Activated CD8-positive, alpha-beta T cell treated with anti-CD3 and anti-CD28 coated beads for 36 hours (primary cell): ENCODE measurements at regions of chr7 and their contacts with region 1.

Region 1: GRCh38 chr7:49618028-49618427 is 155.4 kb upstream of the VWC2 start:
- DNase-seq: no peak
- ATAC-seq: no peak
- H3K4me3 Mint-ChIP-seq: no peak overlapping the region
- H3K27ac Mint-ChIP-seq: no peak overlapping the region
- H3K4me1 Mint-ChIP-seq: no peaks in the 10 kb centered on the region
- H3K27me3 Mint-ChIP-seq: no peaks in the 10 kb centered on the region
- CTCF ChIP-seq: no peak

Region 2: DNA sequence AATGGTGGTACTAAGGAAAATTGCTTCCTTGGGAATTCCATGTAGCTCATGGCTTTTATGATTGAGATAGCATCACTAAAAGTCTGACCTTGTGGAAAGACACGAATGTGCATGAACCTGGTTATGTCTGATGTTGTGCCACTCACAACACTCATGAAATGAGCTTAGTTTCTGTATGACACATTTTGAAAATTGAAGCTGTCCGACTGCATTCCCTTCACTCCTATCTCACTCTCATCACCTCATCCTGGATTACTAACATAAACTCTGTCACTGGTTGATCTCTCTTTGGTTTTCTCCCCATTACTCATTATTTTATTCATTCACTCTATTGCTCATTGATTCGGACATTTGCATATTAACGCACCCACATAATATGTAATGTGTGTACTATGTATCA is 34.6 kb before region 1 on chr7:
- CTCF ChIA-PET with region 1: no interaction called
- POLR2A ChIA-PET with region 1: no interaction called
- intact Hi-C with region 1: no loop called
- DNase-seq: no peak
- ATAC-seq: no peak
- H3K4me3 Mint-ChIP-seq: no peak overlapping the region
- H3K27ac Mint-ChIP-seq: no peak overlapping the region
- H3K4me1 Mint-ChIP-seq: no peaks in the 10 kb centered on the region
- H3K27me3 Mint-ChIP-seq: no peaks in the 10 kb centered on the region
- CTCF ChIP-seq: no peak

Region 3: DNA sequence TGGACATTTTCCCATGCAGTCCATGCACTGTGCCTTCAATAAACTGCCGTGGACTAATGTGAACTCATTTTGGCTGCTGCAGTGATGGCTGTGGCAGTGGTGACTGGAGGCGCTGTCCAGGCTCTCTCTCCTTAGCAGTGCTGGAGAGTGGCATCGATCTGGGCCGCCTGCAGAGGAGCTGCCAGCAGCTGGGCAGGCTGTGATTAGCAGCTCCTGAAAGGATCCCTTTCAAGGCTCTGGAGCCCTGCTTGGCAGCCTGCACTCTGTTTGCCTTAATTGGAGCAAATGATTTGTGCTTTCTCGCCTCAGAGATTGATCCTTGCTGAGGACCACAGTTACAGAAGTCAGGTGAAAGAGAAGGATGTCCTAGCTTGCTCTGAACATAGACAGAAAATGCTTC is 25.3 kb after region 1 on chr7:
- CTCF ChIA-PET with region 1: no interaction called
- POLR2A ChIA-PET with region 1: no interaction called
- intact Hi-C with region 1: loop called (anchors 1 kb)
- DNase-seq: no peak
- ATAC-seq: no peak
- H3K4me3 Mint-ChIP-seq: no peak overlapping the region
- H3K27ac Mint-ChIP-seq: no peak overlapping the region
- H3K4me1 Mint-ChIP-seq: no peaks in the 10 kb centered on the region
- H3K27me3 Mint-ChIP-seq: no peaks in the 10 kb centered on the region
- CTCF ChIP-seq: no peak